ENCODE measurements at regions of chr5 and their contacts with region 1.

Region 1: GRCh38 chr5:116454417-116454927 is 120.2 kb downstream of the SEMA6A start:
- DNase-seq: no peak
- H3K4me3 Mint-ChIP-seq: no peak overlapping the region
- H3K27ac Mint-ChIP-seq: no peak overlapping the region
- H3K4me1 Mint-ChIP-seq: peaks cover 4% of the 10 kb centered on the region
- H3K27me3 Mint-ChIP-seq: peaks cover 5% of the 10 kb centered on the region

Region 2: DNA sequence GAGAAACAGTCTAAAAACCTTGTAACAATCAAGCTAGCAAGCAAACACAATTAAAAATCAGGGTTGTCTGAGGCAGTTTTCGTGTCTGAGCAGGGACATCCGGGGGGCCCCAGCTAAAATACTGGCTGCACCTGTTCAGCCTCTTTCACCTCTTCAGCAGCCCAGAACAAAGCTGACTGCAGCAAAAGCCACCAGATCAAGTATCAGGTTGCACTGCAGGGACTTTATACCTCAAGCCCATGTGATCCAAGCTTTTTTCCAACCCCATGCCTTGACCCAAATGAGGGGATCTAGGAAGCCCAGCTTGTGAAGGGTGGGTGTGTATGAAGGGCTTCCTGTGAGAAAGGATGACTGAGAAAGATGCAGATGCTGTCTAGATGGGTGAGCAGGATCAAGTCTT is 13.2 kb before region 1 on chr5:
- intact Hi-C with region 1: loop called (anchors 2 kb)
- DNase-seq: no peak
- H3K4me3 Mint-ChIP-seq: no peak overlapping the region
- H3K27ac Mint-ChIP-seq: no peak overlapping the region
- H3K4me1 Mint-ChIP-seq: no peaks in the 10 kb centered on the region
- H3K27me3 Mint-ChIP-seq: no peaks in the 10 kb centered on the region